Ascending aorta (tissue), 2 donors: ENCODE measurements at regions of chr10 and their contacts with region 1.

Region 1: DNA sequence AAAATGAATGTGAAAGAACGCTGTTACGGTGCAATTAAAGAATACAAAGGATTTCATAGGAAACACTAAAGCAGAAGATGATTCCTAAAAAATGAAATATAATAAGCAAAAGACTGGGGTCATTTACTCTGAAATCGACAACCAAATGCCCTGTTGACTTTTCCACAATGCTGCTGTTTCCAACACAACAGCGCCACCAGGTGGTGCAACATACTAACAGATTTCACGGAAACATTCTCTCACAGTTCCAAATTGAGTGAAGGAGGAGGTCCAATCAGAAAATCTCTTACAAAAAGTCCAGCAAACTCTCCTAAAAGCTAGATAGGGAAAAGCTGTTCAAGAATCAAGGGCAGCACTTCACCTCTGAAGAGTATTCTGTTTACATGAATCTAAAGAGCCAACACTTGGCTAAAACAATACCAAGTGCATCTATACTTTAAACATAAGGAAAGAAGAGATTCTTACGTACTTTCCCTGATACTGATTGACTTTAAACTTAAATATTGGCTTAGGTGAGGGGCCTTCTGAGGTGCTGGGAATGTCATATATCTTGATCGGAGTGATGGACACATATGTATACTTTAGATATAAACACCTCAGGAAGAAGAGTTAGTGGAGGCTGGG is 55.9 kb downstream of the UPF2 start:
- DNase-seq: peak in 1 of 2 donors; percentile 86
- H3K4me3 ChIP-seq: no peak overlapping the region
- H3K27ac ChIP-seq: no peak overlapping the region
- H3K4me1 ChIP-seq: no peaks in the 10 kb centered on the region
- H3K27me3 ChIP-seq: no peaks in the 10 kb centered on the region
- CTCF ChIP-seq: peak; percentile 60 to 78 (median 77)

Region 2: DNA sequence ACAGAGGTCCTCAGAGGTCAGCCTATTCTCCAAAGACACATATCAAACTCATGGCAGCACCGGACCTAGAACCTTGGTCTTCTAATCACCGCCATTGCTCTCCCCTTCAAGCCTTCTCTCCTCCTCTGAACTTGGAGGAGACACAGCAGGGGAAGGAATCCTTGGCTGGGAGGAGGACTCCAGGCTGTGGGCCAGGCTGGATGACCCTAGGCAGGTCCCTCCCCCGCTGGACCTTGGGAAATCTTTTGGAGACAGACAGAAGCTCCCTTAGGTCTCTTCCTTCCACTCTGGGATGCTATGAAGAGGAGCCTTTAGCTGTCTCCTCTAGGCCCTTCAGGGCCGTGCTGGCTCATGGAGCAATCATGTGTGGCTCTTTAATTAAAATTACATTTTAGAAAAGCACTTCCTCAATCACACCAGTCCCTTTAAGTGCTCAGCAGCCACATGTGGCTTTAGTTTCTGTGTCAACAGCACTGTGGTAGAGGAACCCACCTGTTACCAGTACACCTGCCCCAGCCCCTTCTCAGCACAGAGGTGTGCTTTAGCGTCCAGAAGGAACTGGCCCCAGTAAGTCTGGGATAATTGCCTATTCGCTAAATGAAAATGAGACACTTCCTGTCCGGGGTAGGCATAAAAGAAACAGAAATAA is 730.8 kb before region 1 on chr10:
- intact Hi-C with region 1: no loop called
- DNase-seq: no peak
- H3K4me3 ChIP-seq: no peak overlapping the region
- H3K27ac ChIP-seq: no peak overlapping the region
- H3K4me1 ChIP-seq: no peaks in the 10 kb centered on the region
- H3K27me3 ChIP-seq: no peaks in the 10 kb centered on the region
- CTCF ChIP-seq: no peak

Region 3: DNA sequence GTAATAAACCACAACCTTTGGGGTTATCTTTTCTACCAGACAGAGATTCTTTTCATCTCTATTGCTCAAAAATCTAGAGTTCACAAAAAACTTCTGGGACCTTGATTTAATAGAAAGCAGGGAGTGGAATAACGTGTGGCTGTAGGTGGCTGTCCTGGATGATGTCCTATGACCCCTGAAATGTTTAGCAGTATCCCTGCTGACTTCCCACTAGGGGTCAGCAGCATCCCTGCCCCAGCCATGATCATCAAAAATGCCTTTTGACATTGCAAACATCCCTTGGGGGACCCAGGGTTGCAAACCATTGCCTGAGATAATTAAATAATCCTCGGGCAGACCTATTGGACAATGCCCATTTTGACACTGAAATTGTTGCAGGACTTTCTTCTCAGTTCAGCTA is 552.4 kb before region 1 on chr10:
- intact Hi-C with region 1: no loop called
- DNase-seq: no peak
- H3K4me3 ChIP-seq: no peak overlapping the region
- H3K27ac ChIP-seq: no peak overlapping the region
- H3K4me1 ChIP-seq: no peaks in the 10 kb centered on the region
- H3K27me3 ChIP-seq: no peaks in the 10 kb centered on the region
- CTCF ChIP-seq: no peak

Region 4: GRCh38 chr10:11782793-11783557 is 203.7 kb before region 1 on chr10:
- intact Hi-C with region 1: loop called (anchors 5 kb)
- DNase-seq: no peak
- H3K4me3 ChIP-seq: no peak overlapping the region
- H3K27ac ChIP-seq: no peak overlapping the region
- H3K4me1 ChIP-seq: no peaks in the 10 kb centered on the region
- H3K27me3 ChIP-seq: no peaks in the 10 kb centered on the region
- CTCF ChIP-seq: peak; percentile 23 to 66 (median 44)

Region 5: GRCh38 chr10:11936389-11937152 is 50.1 kb before region 1 on chr10:
- intact Hi-C with region 1: no loop called
- DNase-seq: no peak
- H3K4me3 ChIP-seq: no peak overlapping the region
- H3K27ac ChIP-seq: no peak overlapping the region
- H3K4me1 ChIP-seq: no peaks in the 10 kb centered on the region
- H3K27me3 ChIP-seq: no peaks in the 10 kb centered on the region
- CTCF ChIP-seq: no peak